ENCODE measurements at regions of chr20 and their contacts with region 1.

Region 1: GRCh38 chr20:54062812-54063280 is 7.5 kb downstream of the BCAS1 start:
- DNase-seq: peak; percentile 70
- ATAC-seq: peak; percentile 64
- H3K4me3 ChIP-seq: no peak overlapping the region
- H3K27ac ChIP-seq: no peak overlapping the region
- H3K4me1 ChIP-seq: peaks cover 16% of the 10 kb centered on the region
- H3K27me3 ChIP-seq: no peaks in the 10 kb centered on the region; a peak in 1 of 5 replicates
- CTCF ChIP-seq: peak; percentile 91
- EP300 ChIP-seq: no peak
- POLR2A ChIP-seq: no peak
- RAD21 ChIP-seq: peak; percentile 80

Region 2: GRCh38 chr20:53939572-53940359 is 123.1 kb before region 1 on chr20:
- CTCF ChIA-PET with region 1: no interaction called
- POLR2A ChIA-PET with region 1: interaction called, 9 read pairs
- in situ Hi-C with region 1: no loop called
- intact Hi-C with region 1: loop called (anchors 1 kb)
- DNase-seq: peak; percentile 95
- ATAC-seq: peak; percentile 91
- H3K4me3 ChIP-seq: no peak overlapping the region; a peak in 1 of 6 replicates
- H3K27ac ChIP-seq: no peak overlapping the region
- H3K4me1 ChIP-seq: peaks cover 83% of the 10 kb centered on the region
- H3K27me3 ChIP-seq: no peaks in the 10 kb centered on the region; a peak in 1 of 5 replicates
- CTCF ChIP-seq: peak; percentile 94
- EP300 ChIP-seq: no peak
- POLR2A ChIP-seq: no peak
- RAD21 ChIP-seq: peak; percentile 95

Region 3: GRCh38 chr20:54044156-54044555 is 18.7 kb before region 1 on chr20:
- CTCF ChIA-PET with region 1: no interaction called
- POLR2A ChIA-PET with region 1: no interaction called
- in situ Hi-C with region 1: no loop called
- intact Hi-C with region 1: no loop called
- DNase-seq: no peak
- ATAC-seq: no peak
- H3K4me3 ChIP-seq: no peak overlapping the region
- H3K27ac ChIP-seq: no peak overlapping the region
- H3K4me1 ChIP-seq: no peaks in the 10 kb centered on the region
- H3K27me3 ChIP-seq: no peaks in the 10 kb centered on the region
- CTCF ChIP-seq: no peak
- EP300 ChIP-seq: no peak
- POLR2A ChIP-seq: no peak
- RAD21 ChIP-seq: no peak

Region 4: DNA sequence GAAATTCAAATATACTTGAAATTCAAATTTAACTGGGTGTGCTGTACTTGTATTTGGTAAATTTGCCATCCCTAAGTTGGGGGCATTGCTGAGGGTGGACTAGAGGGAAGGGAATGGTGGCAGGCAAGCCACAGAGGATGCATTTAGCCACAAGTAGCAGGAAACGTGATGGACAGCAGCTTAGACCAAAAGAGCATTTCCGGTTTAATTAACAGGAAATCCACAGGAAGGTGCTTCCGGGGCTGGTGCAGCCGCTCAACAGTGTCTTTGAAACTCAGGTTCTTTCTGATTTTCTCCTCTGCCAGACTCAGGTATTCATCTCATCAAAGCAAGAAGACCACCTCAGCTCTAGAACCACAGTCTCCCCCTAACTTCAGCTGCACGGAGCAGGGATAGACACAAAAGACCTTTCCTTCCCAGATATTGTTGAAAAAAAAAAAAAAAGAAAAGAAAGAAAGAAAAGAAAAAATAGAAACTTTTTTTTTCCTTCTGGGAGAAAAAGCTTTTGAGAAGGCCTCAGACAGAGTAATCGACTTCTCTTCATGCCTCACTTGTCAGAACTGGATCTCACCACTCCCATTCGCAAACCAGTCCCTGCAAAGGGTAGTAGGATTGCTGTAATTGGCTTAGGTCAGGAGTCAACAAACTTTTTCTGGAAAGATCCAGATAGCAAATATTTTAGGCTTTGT is 15.6 kb after region 1 on chr20:
- CTCF ChIA-PET with region 1: no interaction called
- POLR2A ChIA-PET with region 1: interaction called, 16 read pairs
- in situ Hi-C with region 1: no loop called
- intact Hi-C with region 1: no loop called
- DNase-seq: peak; percentile 49
- ATAC-seq: no peak; the same call in 2 of the 3 replicates
- H3K4me3 ChIP-seq: no peak overlapping the region; a peak in 1 of 6 replicates
- H3K27ac ChIP-seq: no peak overlapping the region
- H3K4me1 ChIP-seq: peaks cover 37% of the 10 kb centered on the region
- H3K27me3 ChIP-seq: no peaks in the 10 kb centered on the region; a peak in 2 of 5 replicates
- CTCF ChIP-seq: no peak
- EP300 ChIP-seq: no peak
- POLR2A ChIP-seq: no peak
- RAD21 ChIP-seq: no peak

Region 5: GRCh38 chr20:54132612-54133433 is 70.0 kb after region 1 on chr20:
- CTCF ChIA-PET with region 1: no interaction called
- POLR2A ChIA-PET with region 1: interaction called, 15 read pairs
- in situ Hi-C with region 1: no loop called
- intact Hi-C with region 1: no loop called
- DNase-seq: peak; percentile 100
- ATAC-seq: peak; percentile 93
- H3K4me3 ChIP-seq: peak overlapping the region; percentile 0 to 54 (median 7); a peak in 2 of 6 replicates
- H3K27ac ChIP-seq: peak overlapping the region; percentile 99
- H3K4me1 ChIP-seq: peaks cover 56% of the 10 kb centered on the region
- H3K27me3 ChIP-seq: no peaks in the 10 kb centered on the region
- CTCF ChIP-seq: no peak
- EP300 ChIP-seq: peak; percentile 99
- POLR2A ChIP-seq: peak; percentile 9 to 80; a peak in 3 of 4 replicates
- RAD21 ChIP-seq: peak; percentile 63

Region 6: DNA sequence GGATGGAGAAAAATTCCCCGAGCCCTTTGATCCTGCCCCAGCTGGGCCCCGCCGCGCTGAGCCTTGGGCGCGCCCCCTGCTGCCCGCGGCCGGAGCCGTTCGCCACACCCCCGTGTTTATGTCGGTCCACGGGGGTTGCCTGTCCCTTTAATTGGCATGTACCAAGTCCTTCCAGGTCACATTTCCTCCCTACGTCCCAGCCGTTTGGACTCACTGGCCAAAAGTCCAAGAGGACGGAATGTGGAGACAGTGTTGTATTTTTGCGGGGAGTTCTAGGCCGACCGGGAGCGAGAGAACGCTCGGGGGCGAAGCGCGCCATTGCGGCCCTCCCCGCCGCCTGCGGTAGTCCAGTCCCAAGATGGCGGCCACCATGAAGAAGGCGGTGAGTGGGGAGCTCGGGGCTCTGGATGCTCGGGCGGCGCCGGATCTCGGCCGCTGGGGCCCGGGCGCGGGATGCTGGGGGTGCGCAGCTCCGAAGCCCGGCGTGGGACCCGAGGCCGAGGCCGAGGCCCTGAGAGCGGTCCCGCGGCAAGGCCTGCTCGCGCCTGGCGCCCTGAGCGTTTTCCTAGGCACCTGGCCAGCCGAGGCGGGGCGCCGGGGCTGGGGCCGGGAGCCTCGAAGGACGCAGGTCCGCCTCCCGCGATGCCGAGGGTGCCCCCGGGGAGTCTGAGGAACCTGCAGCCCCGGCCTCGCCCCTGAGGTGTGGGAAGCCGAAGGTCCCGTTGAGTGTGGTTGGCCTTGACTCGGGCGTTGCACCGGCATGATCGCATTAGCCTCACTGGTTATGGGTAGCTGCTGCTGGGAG is 145.1 kb after region 1 on chr20 and contains the start of gene PFDN4:
- CTCF ChIA-PET with region 1: no interaction called
- POLR2A ChIA-PET with region 1: interaction called, 16 read pairs
- in situ Hi-C with region 1: no loop called
- intact Hi-C with region 1: no loop called
- DNase-seq: peak; percentile 88
- ATAC-seq: peak; percentile 95
- H3K4me3 ChIP-seq: peak within 1 kb of the TSS; percentile 77 to 100 (median 82)
- H3K27ac ChIP-seq: peak within 1 kb of the TSS; percentile 97
- H3K4me1 ChIP-seq: peaks cover 50% of the 10 kb centered on the region
- H3K27me3 ChIP-seq: peaks cover 0 to 6% of the 10 kb centered on the region in 2 experiments; a peak in 1 of 5 replicates
- CTCF ChIP-seq: peak; percentile 99
- EP300 ChIP-seq: peak; percentile 43 to 61; a peak in 3 of 4 replicates
- POLR2A ChIP-seq: peak; percentile 59 to 80; a peak in 3 of 4 replicates
- RAD21 ChIP-seq: peak; percentile 63
- total RNA-seq, gene PFDN4: 227 and 299 TPM in 2 replicates